Ovary (tissue), 10 donors: ENCODE measurements at regions of chrX and their contacts with region 1.

Region 1: GRCh38 chrX:46758906-46759644 is at the start of gene SLC9A7:
- DNase-seq: peak; percentile 72 to 88 (median 80)
- H3K4me3 ChIP-seq: peak within 1 kb of the TSS; percentile 38
- H3K27ac ChIP-seq: peak within 1 kb of the TSS; percentile 49
- H3K4me1 ChIP-seq: peaks cover 3% of the 10 kb centered on the region
- H3K27me3 ChIP-seq: no peaks in the 10 kb centered on the region
- CTCF ChIP-seq: peak; percentile 54 to 95 (median 86)
- EP300 ChIP-seq: no peak
- POLR2A ChIP-seq: no peak
- total RNA-seq, gene SLC9A7: 7.9 to 22.3 (median 10.8) TPM

Region 2: DNA sequence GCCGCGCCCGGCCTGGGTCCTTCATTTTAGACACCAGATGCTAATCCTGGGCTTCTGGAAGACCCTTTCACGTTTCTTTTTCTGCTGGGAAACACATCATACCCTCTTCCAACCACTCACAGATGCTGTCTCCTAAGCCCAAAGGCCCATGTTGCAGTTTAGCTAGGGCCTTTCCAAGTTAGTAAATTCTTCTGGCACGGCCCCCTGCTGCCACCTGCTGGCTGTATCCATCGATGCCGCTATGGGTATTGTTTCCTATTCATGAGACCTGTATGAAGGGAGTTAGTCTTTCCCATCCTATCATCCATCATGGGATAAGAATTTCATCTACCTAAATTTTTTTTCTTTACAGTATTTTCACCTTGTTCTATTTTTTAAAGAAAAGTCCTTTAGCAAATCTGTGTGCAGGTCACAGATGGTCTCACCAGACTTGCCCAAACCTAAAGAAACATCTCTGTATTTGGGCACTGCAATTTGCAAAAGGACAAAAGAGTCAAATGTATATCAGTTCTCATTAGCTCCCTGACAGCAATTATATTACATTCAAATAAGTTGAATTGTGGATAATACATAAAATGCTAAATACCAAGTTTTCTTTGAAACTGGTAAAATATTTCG is 37.6 kb after region 1 on chrX:
- intact Hi-C with region 1: loop called in 3 of 4 experiments (anchors 2 to 5 kb)
- DNase-seq: peak; percentile 71 to 86 (median 81)
- H3K4me3 ChIP-seq: no peak overlapping the region
- H3K27ac ChIP-seq: no peak overlapping the region
- H3K4me1 ChIP-seq: peaks cover 3% of the 10 kb centered on the region
- H3K27me3 ChIP-seq: no peaks in the 10 kb centered on the region
- CTCF ChIP-seq: peak; percentile 19 to 71 (median 69)
- EP300 ChIP-seq: no peak
- POLR2A ChIP-seq: no peak

Region 3: DNA sequence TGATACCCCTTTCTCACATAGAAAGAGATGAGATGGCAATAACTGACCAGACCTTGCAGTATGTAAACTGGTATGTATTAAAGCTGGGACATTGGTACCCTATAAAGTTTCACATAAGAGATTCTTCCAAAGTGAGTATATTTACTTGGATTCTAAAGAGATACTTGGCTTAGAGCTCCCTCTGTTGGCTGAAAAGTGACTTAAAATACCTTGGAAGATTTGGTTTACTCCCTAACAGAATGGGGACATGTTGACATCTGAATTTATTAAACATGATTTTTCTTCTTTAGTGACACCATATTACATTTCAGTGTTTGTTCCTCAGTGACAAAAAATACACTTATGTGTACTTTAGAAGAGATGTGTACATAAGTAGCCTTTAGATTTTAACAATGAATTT is 271.3 kb after region 1 on chrX:
- intact Hi-C with region 1: loop called in 1 of 4 experiments (anchors 10 kb)
- DNase-seq: no peak
- H3K4me3 ChIP-seq: no peak overlapping the region
- H3K27ac ChIP-seq: no peak overlapping the region
- H3K4me1 ChIP-seq: no peaks in the 10 kb centered on the region
- H3K27me3 ChIP-seq: no peaks in the 10 kb centered on the region
- CTCF ChIP-seq: peak; percentile 29 to 50 (median 33)
- EP300 ChIP-seq: no peak
- POLR2A ChIP-seq: no peak